Activated naive CD8-positive, alpha-beta T cell treated with anti-CD3 and anti-CD28 coated beads, Interleukin-2, amount 10 ng/mL, durations not matched to agents 7 days and 5 days (primary cell): ENCODE measurements at regions of chr2 and their contacts with region 1.

Region 1: GRCh38 chr2:30336978-30337841 is 105.9 kb downstream of the LBH start:
- DNase-seq: peak; percentile 74
- ATAC-seq: peak; percentile 90
- H3K4me3 Mint-ChIP-seq: peak overlapping the region; percentile 83
- H3K27ac Mint-ChIP-seq: peak overlapping the region; percentile 97
- H3K4me1 Mint-ChIP-seq: peaks cover 61% of the 10 kb centered on the region
- H3K27me3 Mint-ChIP-seq: no peaks in the 10 kb centered on the region

Region 2: DNA sequence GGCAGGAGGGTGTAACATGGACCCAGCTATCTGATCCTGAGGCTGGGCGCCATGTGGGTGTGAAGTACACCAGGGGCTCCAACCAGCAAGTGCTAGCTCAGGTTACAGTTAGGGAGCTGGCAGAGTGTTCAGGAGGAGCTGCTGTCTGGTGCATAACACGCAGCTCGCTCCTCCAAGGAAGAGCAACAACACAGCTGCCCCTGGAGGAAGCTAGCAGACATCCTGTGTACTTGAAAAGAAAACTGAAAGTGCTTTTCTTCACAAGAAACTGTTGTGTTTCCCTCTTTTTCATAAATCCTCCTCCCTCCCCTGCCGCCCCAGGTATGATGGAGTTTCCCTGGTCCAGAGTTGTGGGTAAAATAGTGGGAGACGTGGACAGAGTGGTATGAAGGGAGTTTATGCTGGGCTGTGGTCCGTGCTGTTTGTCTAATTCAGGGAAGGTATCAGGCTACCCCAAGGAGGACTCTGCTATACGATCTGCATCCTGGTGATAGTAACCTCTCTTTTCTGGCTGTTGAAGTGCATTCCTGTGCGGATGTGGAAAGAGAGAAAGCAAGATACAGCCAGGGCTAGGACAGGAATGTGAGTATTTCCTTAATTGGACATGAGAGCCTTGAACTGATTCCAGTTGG is 112.0 kb before region 1 on chr2:
- POLR2A ChIA-PET with region 1: interaction called, 123 read pairs
- DNase-seq: peak; percentile 55
- ATAC-seq: peak; percentile 87
- H3K4me3 Mint-ChIP-seq: peak overlapping the region; percentile 98
- H3K27ac Mint-ChIP-seq: peak overlapping the region; percentile 99
- H3K4me1 Mint-ChIP-seq: peaks cover 39% of the 10 kb centered on the region
- H3K27me3 Mint-ChIP-seq: no peaks in the 10 kb centered on the region

Region 3: DNA sequence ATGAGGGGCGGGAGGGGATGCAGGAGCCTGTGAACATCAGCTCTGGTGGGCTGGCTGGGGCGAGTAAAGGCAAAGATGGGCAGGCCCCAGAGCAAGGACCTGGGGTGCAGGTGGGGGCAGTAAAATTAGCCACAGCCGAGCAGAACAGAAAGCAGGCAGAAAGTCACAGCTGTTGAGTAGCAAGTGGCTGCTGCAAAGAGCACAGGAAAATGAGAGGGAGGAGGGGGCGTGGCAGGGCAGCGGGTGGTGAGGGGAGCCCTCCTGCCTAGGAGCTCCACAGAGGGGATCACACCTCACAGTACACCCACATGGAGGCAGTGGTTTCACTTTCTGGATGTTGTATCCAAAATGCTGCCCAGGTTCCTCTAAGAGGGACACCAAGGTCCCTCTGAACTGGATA is 26.3 kb before region 1 on chr2:
- POLR2A ChIA-PET with region 1: no interaction called
- DNase-seq: no peak
- ATAC-seq: no peak
- H3K4me3 Mint-ChIP-seq: peak overlapping the region; percentile 11
- H3K27ac Mint-ChIP-seq: peak overlapping the region; percentile 53
- H3K4me1 Mint-ChIP-seq: peaks cover 29% of the 10 kb centered on the region
- H3K27me3 Mint-ChIP-seq: no peaks in the 10 kb centered on the region